Activated CD4-positive, alpha-beta T cell treated with anti-CD3 and anti-CD28 coated beads for 36 hours (primary cell): ENCODE measurements at regions of chr6 and their contacts with region 1.

Region 1: DNA sequence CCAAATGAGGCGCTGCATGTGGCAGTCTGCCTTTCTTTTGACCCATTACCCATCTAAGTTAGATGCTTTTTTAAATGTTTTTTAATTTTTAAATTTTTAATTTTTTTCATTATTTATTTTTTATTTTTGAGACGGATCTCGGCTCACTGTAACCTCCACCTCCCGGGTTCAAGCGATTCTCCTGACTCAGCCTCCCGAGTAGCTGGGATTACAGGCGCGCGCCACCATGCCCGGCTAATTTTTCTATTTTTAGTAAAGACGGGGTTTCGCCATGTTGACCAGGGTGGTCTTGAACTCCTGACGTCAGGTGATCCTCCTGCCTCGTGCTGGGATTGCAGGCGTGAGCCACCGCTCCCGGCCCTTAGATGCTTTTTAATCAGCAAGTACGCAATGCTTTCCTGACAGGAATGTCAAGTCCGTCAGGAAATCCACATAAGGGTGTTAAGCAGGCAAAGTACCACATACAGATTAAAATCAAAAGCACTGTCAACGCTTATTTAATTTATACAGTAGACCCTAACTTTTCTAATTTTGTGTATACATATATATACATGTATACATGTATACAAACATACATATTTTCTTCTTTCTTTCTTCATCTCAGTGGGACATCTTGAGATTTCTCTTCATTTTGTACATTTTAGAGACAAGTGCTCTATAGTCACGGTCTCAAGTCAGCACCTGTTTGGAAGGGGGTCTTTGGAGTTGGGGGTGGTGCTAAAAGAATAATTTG is 995 bp upstream of the GSTA4 start:
- DNase-seq: peak; percentile 68
- ATAC-seq: no peak
- H3K4me3 Mint-ChIP-seq: peak overlapping the region; percentile 83
- H3K27ac Mint-ChIP-seq: peak overlapping the region; percentile 77
- H3K4me1 Mint-ChIP-seq: peaks cover 32% of the 10 kb centered on the region
- H3K27me3 Mint-ChIP-seq: peaks cover 4% of the 10 kb centered on the region

Region 2: DNA sequence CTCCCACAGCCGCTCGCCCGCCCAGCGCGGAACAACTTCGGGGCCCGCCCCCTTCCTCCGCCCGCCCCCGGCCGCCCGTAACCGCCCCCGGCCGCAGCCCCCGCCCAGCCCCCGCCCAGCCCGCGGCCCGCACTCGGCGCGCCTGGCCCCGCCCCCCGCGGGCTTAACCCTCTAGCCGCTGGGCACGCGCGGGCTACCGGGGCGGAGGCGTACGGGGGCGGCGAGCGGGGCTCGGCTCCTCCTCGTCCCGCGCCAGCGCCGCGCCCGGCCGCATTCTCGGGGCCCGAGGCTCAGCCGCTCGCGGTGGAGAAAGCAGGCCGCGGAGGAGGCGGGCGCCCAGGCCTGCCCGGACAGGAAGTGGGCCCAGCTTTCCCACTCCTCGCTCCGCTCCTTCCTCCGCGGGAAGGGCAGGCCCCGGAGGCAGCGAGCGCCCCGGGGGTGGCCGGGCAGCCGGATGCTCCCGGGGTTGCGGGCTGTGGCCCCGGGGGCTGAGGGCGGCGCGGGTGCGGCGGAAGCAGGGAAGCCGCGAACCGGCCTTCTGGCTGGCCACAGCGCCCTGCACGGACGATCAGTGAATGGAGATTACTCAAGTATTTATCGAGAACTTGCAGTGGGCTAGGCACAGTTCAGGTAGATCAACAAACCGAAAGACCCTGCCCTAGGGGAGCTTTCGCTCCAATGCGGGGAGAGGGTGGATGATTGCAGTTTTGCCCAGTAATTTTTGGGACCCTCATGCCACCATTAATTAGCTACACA is 418.9 kb before region 1 on chr6 and contains the start of gene TRAM2:
- CTCF ChIA-PET with region 1: no interaction called
- POLR2A ChIA-PET with region 1: no interaction called
- intact Hi-C with region 1: loop called in 1 of 2 experiments (anchors 2 kb)
- DNase-seq: peak; percentile 78
- ATAC-seq: peak; percentile 56
- H3K4me3 Mint-ChIP-seq: peak within 1 kb of the TSS; percentile 79
- H3K27ac Mint-ChIP-seq: peak within 1 kb of the TSS; percentile 80
- H3K4me1 Mint-ChIP-seq: peaks cover 43% of the 10 kb centered on the region
- H3K27me3 Mint-ChIP-seq: peaks cover 2% of the 10 kb centered on the region
- total RNA-seq, gene TRAM2: 3.5 to 3.6 TPM

Region 3: DNA sequence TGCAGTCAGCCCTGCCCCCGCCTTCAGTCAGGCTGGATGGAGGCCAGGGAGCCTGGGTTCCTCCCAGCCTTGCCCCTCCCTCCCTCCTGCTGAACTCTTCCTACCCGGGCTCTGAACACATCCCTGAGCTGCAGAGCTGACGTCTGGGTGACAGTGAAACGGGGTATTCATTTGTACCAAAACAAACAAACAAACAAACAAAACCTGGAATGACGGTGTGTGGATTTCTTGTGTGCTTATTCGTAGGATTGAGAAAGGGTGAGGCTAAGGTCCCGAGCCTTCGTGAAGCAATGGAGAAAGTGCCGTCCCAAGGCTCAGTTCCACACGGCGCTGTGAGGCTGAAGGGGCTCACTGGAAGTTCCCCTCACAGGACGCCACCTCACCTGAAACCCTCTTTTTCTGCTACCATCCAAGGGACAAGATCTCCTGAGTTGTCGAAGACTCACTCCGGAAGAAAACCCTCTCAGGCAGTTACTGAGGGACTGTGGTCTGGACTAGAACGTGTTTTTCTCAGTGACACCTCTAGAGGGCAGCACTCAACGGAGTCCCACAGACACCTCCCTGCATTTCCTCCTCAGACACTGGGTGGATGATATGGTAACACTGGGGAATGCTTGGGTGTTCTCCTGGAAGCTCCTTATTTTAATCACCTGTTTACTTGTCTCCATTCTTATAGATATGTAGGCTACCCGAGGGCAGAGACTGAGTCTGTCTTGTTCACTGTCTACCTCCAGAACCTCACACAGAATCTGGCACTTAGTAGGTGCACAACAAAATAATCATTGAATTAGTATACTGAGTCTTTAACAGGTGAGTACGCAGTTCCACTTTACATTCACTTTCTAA is 113.9 kb before region 1 on chr6:
- CTCF ChIA-PET with region 1: interaction called, 5 read pairs
- POLR2A ChIA-PET with region 1: no interaction called
- intact Hi-C with region 1: loop called (anchors 1 kb)
- DNase-seq: peak; percentile 77
- ATAC-seq: peak; percentile 98
- H3K4me3 Mint-ChIP-seq: peak overlapping the region; percentile 73
- H3K27ac Mint-ChIP-seq: peak overlapping the region; percentile 81
- H3K4me1 Mint-ChIP-seq: peaks cover 8% of the 10 kb centered on the region
- H3K27me3 Mint-ChIP-seq: no peaks in the 10 kb centered on the region

Region 4: GRCh38 chr6:52904562-52905279 is 91.4 kb before region 1 on chr6:
- CTCF ChIA-PET with region 1: no interaction called
- POLR2A ChIA-PET with region 1: no interaction called
- intact Hi-C with region 1: no loop called
- DNase-seq: peak; percentile 27
- ATAC-seq: peak; percentile 55
- H3K4me3 Mint-ChIP-seq: no peak overlapping the region
- H3K27ac Mint-ChIP-seq: no peak overlapping the region
- H3K4me1 Mint-ChIP-seq: no peaks in the 10 kb centered on the region
- H3K27me3 Mint-ChIP-seq: peaks cover 12% of the 10 kb centered on the region

Region 5: GRCh38 chr6:52984247-52984646 is 11.8 kb before region 1 on chr6:
- CTCF ChIA-PET with region 1: interaction called, 12 read pairs
- POLR2A ChIA-PET with region 1: interaction called, 5 read pairs
- intact Hi-C with region 1: no loop called
- DNase-seq: peak; percentile 73
- ATAC-seq: peak; percentile 78
- H3K4me3 Mint-ChIP-seq: peak overlapping the region; percentile 41
- H3K27ac Mint-ChIP-seq: peak overlapping the region; percentile 78
- H3K4me1 Mint-ChIP-seq: peaks cover 75% of the 10 kb centered on the region
- H3K27me3 Mint-ChIP-seq: peaks cover 8% of the 10 kb centered on the region

Region 6: GRCh38 chr6:53359072-53359842 is 363.2 kb after region 1 on chr6:
- CTCF ChIA-PET with region 1: no interaction called
- POLR2A ChIA-PET with region 1: no interaction called
- intact Hi-C with region 1: loop called in 1 of 2 experiments (anchors 10 kb)
- DNase-seq: peak; percentile 95
- ATAC-seq: peak; percentile 96
- H3K4me3 Mint-ChIP-seq: peak overlapping the region; percentile 87
- H3K27ac Mint-ChIP-seq: peak overlapping the region; percentile 98
- H3K4me1 Mint-ChIP-seq: peaks cover 45% of the 10 kb centered on the region
- H3K27me3 Mint-ChIP-seq: no peaks in the 10 kb centered on the region